ENCODE measurements at regions of chr14 and their contacts with region 1.

Region 1: DNA sequence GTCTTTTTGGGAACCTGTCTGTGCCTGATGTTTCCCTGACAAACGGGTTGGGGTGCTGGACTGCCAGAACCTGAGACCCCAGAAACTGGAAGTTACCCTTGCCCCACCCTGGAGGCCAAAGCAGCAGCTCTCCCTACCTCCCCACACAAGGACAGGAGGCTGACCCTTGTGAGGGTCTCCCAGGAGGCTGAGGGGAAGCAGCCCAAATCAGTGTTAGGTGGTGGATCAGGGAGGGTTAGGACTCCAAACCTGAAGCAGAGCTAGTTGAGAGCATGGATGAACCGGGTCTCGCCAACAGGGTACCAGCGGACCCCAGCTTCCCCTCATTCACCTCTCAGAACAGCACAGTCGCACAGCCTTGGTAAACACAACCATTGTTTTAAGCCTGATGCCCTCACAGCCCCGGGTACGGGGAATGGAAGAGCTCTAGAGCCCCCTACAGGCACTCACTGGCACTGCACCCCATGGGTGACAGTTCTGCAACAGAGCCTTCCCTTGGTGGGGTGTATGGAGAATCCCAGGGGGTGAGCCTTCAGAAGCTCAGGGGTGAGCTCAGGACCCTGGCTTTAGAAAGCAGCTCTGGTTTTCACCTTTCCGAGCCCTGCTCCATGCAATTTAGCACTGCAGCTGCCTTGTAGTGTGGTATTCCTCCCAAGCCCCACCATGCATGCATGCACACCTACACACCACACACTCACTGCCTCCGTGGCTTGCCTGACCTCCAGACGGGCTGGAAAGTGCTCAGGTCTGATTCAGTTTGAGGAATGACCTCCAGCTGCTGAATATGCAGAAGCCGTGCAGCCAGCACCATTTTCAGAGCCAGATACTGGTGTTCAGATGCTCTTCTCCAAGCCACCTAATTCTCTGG is 11.2 kb downstream of the ESRRB start:
- DNase-seq: peak; percentile 53
- H3K4me3 ChIP-seq: no peak overlapping the region
- H3K27ac ChIP-seq: no peak overlapping the region
- H3K4me1 ChIP-seq: no peaks in the 10 kb centered on the region
- H3K27me3 ChIP-seq: peaks cover 5% of the 10 kb centered on the region
- CTCF ChIP-seq: peak; percentile 99 to 100

Region 2: GRCh38 chr14:75794615-75795038 is 592.5 kb before region 1 on chr14:
- CTCF ChIA-PET with region 1: no interaction called
- dilution Hi-C with region 1: no loop called
- in situ Hi-C with region 1: no loop called
- intact Hi-C with region 1: loop called (anchors 10 kb)
- DNase-seq: peak; percentile 42
- H3K4me3 ChIP-seq: no peak overlapping the region
- H3K27ac ChIP-seq: no peak overlapping the region
- H3K4me1 ChIP-seq: no peaks in the 10 kb centered on the region
- H3K27me3 ChIP-seq: no peaks in the 10 kb centered on the region
- CTCF ChIP-seq: peak; percentile 21 to 43

Region 3: DNA sequence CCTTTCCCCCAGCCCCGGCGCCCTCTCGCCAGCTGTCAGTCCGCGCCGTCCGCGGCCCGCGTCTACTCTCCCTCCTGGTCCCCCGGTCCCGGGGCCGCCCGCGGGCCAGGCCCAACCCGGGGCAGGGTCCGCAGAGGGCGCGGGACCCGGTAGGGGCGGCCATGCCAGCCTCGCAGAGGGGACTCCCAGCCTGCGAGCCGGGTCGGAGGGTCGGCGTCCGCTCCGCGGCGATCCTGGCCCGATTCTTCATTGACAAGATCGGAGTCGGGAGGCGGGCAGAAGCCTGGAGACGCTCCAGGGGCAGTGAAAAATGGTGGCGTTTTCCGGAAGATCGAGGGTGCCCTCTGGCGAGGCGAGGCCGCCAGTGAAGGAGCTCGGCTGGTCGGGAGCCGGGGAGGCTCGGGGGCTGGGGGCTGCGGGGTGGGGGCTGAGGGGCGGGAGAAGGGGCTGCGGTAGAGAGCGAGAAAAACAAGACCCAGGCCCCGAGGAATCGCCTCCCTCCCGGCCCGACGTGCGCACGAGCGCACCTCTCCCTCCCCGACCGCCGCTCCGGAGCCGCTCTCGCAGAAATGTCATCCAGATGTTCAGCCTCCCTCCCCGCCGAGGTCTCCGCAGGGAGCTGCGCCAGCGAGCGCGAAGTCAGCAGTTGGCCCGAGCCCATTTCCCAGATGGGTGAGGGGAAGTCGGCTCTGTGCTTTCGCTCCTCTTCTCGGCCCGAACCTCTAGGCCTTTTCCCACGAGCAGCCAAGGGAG is 404.7 kb before region 1 on chr14:
- CTCF ChIA-PET with region 1: no interaction called
- dilution Hi-C with region 1: no loop called
- in situ Hi-C with region 1: no loop called
- intact Hi-C with region 1: loop called (anchors 1 kb)
- DNase-seq: peak; percentile 72
- H3K4me3 ChIP-seq: peak overlapping the region; percentile 57 to 62 (median 61)
- H3K27ac ChIP-seq: peak overlapping the region; percentile 59
- H3K4me1 ChIP-seq: peaks cover 34% of the 10 kb centered on the region
- H3K27me3 ChIP-seq: no peaks in the 10 kb centered on the region
- CTCF ChIP-seq: peak; percentile 28 to 71

Region 4: DNA sequence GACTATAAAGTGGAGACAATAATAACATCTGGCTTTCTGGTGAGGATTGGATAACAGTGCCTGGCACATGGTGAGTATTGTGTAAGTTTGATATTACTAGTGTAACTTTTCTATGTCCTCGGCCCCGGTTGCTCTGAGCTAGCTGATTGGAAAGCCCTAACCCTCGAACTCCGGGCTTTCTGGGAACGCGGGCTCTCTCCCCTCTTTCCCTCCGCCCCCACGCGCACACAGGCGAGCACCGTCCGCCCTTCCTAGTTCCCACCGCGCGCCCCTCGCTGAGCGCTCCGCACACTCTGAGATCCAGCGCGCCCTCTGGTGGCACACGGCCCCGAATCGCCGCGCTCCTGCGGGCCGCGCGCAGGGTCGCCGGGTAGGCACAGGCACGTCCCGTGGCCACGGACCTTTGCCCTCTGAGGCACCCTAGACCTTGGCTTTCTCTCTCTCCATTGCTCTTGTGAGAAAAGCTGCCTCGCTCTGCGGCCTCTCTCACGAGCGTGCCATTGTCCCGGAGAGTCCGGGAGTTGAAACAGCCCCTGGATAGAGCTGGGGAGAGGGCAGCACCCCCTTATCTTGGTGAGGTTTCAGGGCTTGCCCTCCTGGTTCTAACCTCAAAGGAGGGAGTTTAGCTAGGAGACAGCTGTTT is 34.4 kb before region 1 on chr14:
- CTCF ChIA-PET with region 1: no interaction called
- dilution Hi-C with region 1: no loop called
- in situ Hi-C with region 1: no loop called
- intact Hi-C with region 1: loop called (anchors 2 kb)
- DNase-seq: peak; percentile 21
- H3K4me3 ChIP-seq: peak overlapping the region in 2 of 3 experiments; percentile 13 to 38
- H3K27ac ChIP-seq: no peak overlapping the region
- H3K4me1 ChIP-seq: peaks cover 16% of the 10 kb centered on the region
- H3K27me3 ChIP-seq: peaks cover 3% of the 10 kb centered on the region
- CTCF ChIP-seq: peak; percentile 51 to 87

Region 5: GRCh38 chr14:76456200-76456599 is 69.1 kb after region 1 on chr14:
- CTCF ChIA-PET with region 1: no interaction called
- dilution Hi-C with region 1: no loop called
- in situ Hi-C with region 1: no loop called
- intact Hi-C with region 1: no loop called
- DNase-seq: peak; percentile 24
- H3K4me3 ChIP-seq: no peak overlapping the region
- H3K27ac ChIP-seq: no peak overlapping the region
- H3K4me1 ChIP-seq: no peaks in the 10 kb centered on the region
- H3K27me3 ChIP-seq: no peaks in the 10 kb centered on the region
- CTCF ChIP-seq: peak; percentile 55 to 61

Region 6: DNA sequence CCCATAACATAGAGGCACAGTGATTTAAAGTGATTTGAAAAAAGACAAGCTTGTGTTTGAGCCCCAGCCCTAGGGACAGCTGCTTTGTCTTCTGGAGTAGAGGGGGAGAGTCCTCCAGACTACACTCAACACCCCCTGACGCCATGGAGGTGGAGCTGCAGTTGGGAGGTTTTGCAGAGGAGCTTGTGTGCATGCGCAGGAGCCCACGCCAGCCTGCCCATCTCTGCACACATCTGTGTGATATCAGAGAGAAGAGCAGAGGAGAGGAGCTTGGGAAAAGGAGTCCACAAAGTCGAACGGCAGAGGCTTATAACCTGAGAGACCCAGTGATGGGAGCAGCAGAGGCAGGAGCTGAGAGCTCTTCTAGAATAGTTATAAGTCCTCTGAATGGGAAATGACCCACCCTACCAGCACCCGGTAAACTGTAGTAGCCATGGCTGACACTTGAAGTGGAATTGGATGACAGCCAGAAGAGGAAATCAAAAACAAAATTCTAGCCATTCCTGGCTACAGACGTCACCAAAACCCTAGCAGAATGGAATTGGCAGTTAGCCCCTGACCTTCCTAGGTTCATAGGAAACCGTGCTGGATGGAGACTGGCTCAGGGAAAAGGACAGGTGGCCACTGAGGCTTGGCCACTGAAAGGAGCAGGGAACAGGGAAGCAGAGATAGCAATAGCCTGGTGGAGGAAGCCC is 189.0 kb after region 1 on chr14:
- CTCF ChIA-PET with region 1: no interaction called
- dilution Hi-C with region 1: no loop called
- in situ Hi-C with region 1: no loop called
- intact Hi-C with region 1: no loop called
- DNase-seq: no peak
- H3K4me3 ChIP-seq: no peak overlapping the region
- H3K27ac ChIP-seq: no peak overlapping the region
- H3K4me1 ChIP-seq: peaks cover 7% of the 10 kb centered on the region
- H3K27me3 ChIP-seq: no peaks in the 10 kb centered on the region
- CTCF ChIP-seq: no peak

Measured in mammary epithelial cell (primary cell).